Dendritic cell treated with granulocyte-macrophage colony-stimulating factor and Interleukin-4, amounts not matched to agents 40 ng/mL and 50 ng/mL, for 4 days (primary cell): ENCODE measurements at regions of chr1 and their contacts with region 1.

Region 1: DNA sequence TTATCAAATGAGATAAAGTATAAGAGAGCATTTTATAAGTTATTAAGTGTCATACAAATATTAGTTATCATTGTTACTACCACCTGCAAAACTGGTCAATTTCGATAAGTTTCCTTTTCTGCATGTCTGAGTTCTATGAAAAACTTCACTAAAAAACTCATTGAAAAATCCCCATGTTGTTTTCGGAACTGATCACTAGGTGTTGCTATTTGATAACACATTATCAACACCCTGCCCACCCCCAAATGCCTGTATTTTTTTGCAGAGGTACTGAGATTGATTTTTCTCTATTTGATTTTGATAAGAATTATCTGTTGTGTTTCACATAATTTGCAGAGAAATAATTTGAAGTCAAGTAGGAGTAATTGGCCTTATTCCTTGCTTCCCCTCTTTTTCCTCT is 22.1 kb upstream of the DISP1 start:
- H3K4me3 Mint-ChIP-seq: no peak overlapping the region
- H3K27ac Mint-ChIP-seq: no peak overlapping the region
- H3K4me1 Mint-ChIP-seq: peaks cover 5% of the 10 kb centered on the region
- H3K27me3 Mint-ChIP-seq: peaks cover 10% of the 10 kb centered on the region

Region 2: GRCh38 chr1:223081181-223081994 is 288.6 kb after region 1 on chr1:
- intact Hi-C with region 1: loop called (anchors 2 kb)
- H3K4me3 Mint-ChIP-seq: peak overlapping the region; percentile 58
- H3K27ac Mint-ChIP-seq: no peak overlapping the region
- H3K4me1 Mint-ChIP-seq: peaks cover 3% of the 10 kb centered on the region
- H3K27me3 Mint-ChIP-seq: peaks cover 10% of the 10 kb centered on the region